Activated B cell treated with CpG ODN at 0.5 μM for 24 hours (primary cell): ENCODE measurements at regions of chr7 and their contacts with region 1.

Region 1: DNA sequence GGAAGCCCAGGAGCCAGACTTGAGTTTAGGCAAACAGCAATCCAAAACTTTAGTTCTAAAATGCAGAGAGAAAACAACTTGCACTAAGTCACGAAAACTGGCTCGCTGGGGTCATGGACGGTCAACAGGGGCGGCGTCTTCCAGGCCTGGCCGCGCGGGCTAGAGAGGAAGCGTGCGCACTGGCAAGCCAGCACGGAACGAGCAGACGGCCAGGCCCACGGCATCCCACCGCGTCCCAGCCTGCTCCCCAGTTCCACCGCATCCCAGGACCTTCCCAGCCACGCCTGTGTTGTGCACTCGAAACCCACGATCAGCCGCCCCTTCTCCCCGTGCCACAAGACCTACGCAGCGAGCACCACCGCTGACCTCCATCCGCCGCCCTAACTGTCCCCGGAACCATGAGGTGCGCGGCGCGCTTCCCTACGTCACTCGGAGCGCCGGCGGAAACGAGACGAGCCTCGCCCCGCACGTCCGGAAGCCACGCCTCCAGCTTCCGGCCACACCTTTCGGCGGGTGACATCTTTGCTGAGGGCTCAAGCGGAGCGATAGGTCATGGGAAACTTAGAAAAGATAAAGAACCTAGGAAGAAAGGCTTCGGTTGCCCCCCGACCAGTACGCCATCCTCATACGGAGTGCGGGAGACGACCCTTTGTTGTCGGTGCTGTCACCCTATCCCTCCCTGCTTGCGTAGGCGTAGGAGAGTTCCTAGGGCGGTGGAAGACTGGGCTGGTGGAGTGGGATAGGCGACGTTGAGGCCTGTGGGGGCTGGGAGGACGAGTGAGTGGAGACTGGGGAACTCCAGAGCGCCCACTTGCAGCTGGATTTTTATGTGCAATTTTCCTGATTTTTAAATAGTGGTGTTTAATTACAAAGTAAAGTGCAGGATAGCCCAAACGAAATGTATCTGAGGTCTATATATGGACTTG is at the start of gene TBRG4:
- DNase-seq: peak; percentile 94
- ATAC-seq: peak; percentile 93
- H3K4me3 Mint-ChIP-seq: peak within 1 kb of the TSS; percentile 98
- H3K27ac Mint-ChIP-seq: peak within 1 kb of the TSS; percentile 97
- H3K4me1 Mint-ChIP-seq: peaks cover 44% of the 10 kb centered on the region
- H3K27me3 Mint-ChIP-seq: peaks cover 4% of the 10 kb centered on the region
- CTCF ChIP-seq: no peak
- total RNA-seq, gene TBRG4: 109 and 128 TPM in 2 replicates

Region 2: GRCh38 chr7:44123190-44124003 is 988.2 kb before region 1 on chr7 and contains the start of gene POLD2:
- CTCF ChIA-PET with region 1: no interaction called
- POLR2A ChIA-PET with region 1: no interaction called
- intact Hi-C with region 1: loop called (anchors 5 kb)
- DNase-seq: peak; percentile 96
- ATAC-seq: peak; percentile 98
- H3K4me3 Mint-ChIP-seq: peak within 1 kb of the TSS; percentile 88
- H3K27ac Mint-ChIP-seq: peak within 1 kb of the TSS; percentile 79
- H3K4me1 Mint-ChIP-seq: peaks cover 25% of the 10 kb centered on the region
- H3K27me3 Mint-ChIP-seq: no peaks in the 10 kb centered on the region
- CTCF ChIP-seq: no peak
- total RNA-seq, gene POLD2: 146 and 147 TPM in 2 replicates

Region 3: GRCh38 chr7:44559485-44559884 is 552.1 kb before region 1 on chr7:
- CTCF ChIA-PET with region 1: no interaction called
- POLR2A ChIA-PET with region 1: no interaction called
- intact Hi-C with region 1: no loop called
- DNase-seq: no peak
- ATAC-seq: no peak
- H3K4me3 Mint-ChIP-seq: no peak overlapping the region
- H3K27ac Mint-ChIP-seq: no peak overlapping the region
- H3K4me1 Mint-ChIP-seq: peaks cover 3% of the 10 kb centered on the region
- H3K27me3 Mint-ChIP-seq: peaks cover 3% of the 10 kb centered on the region
- CTCF ChIP-seq: no peak

Region 4: DNA sequence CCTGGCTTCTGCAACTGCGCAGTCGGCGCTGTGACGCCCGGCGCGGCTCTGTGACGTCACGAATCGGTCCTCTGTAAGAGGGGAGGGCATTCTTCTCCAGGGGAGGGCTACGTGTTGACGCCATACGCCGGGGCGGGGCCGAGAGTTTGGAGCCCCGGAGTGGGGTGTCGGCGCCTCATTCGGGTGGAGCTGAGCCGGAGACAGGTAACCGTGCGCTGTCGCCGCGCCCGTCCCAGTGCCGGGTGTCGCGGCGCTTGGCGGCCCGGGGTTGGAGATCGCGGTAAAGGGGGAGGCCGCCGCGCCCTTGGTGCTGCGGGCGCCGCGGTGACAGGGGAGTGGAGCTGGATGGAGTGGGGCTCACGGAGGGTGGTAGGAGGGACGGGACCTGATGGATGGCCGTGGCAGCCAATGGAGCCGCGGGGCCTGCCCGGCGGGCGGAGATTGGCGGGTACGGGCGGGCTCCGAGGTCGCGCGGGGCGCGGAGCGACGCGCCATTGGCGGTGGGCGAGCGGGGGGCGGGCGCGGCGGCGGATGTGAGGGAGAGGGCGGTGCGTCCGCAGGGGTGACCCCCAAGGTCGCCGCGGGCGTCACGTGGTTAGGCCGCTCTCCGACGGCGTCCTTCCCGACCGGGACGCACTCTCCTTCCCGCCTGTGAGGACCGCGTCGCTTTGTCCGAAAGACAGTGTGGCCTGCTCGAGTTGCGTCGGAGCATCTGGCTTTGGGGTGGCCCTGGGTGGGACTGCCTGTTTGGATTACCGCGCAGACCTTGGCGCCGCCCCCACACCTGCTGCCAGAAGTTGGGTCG is 504.9 kb before region 1 on chr7 and contains the start of gene OGDH:
- CTCF ChIA-PET with region 1: no interaction called
- POLR2A ChIA-PET with region 1: interaction called, 4 read pairs
- intact Hi-C with region 1: loop called (anchors 1 kb)
- DNase-seq: peak; percentile 100
- ATAC-seq: peak; percentile 94
- H3K4me3 Mint-ChIP-seq: peak within 1 kb of the TSS; percentile 98
- H3K27ac Mint-ChIP-seq: peak within 1 kb of the TSS; percentile 98
- H3K4me1 Mint-ChIP-seq: peaks cover 45% of the 10 kb centered on the region
- H3K27me3 Mint-ChIP-seq: no peaks in the 10 kb centered on the region
- CTCF ChIP-seq: no peak
- total RNA-seq, gene OGDH: 79.5 and 81.7 TPM in 2 replicates

Region 5: DNA sequence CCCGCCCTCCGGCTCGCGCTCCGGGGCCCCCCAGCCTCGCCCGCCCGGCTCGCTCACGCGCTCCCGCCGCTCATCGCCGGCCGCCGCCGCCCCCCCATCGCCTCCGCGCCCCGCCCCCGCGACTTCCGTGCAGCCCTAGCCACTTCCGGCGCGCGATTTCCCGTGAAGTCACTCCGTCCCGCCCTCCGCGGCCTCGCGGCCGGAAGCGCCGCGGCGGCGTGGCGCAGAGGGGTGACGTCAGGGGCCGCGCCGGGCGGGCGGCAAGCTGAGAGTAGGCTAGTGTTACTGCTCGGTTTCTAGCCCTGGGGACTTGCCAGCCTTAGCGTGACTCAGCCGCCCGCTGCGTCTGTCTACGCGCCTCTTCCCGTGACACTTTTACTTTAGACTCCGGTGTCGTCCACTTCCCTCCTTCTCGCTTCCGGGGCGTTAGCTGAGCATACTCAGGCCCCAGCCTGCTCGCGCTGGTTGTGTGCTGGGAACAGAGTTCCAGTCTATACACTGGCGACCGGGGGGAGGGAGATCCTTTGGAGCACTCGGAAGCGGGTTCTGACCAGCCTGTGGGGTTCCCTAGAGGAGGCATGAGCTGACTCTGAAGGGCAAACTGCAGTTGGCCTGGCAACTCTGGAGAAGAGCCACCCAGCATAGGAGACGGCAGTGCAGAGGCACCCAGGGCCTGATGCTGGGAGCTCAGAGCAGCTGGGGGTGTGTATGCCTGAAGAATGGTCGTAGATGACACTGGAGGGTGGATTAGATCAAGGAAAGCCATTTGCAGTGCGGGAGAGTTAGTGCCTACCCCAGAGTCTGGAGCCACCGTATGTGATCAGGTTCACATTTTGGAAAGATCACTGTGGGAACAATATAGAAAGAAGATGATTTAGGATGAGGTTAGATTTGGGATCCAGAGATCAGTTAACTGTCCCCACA is 225.9 kb before region 1 on chr7 and contains the start of gene PURB:
- CTCF ChIA-PET with region 1: interaction called, 3 read pairs
- POLR2A ChIA-PET with region 1: interaction called, 27 read pairs
- intact Hi-C with region 1: loop called (anchors 1 kb)
- DNase-seq: peak; percentile 98
- ATAC-seq: peak; percentile 85
- H3K4me3 Mint-ChIP-seq: peak within 1 kb of the TSS; percentile 95
- H3K27ac Mint-ChIP-seq: peak within 1 kb of the TSS; percentile 99
- H3K4me1 Mint-ChIP-seq: peaks cover 59% of the 10 kb centered on the region
- H3K27me3 Mint-ChIP-seq: no peaks in the 10 kb centered on the region
- CTCF ChIP-seq: no peak
- total RNA-seq, gene PURB: 21.3 and 23.8 TPM in 2 replicates

Region 6: GRCh38 chr7:44980393-44981034 is 131.0 kb before region 1 on chr7:
- CTCF ChIA-PET with region 1: no interaction called
- POLR2A ChIA-PET with region 1: interaction called, 23 read pairs
- intact Hi-C with region 1: loop called (anchors 1 kb)
- DNase-seq: peak; percentile 56
- ATAC-seq: peak; percentile 63
- H3K4me3 Mint-ChIP-seq: peak overlapping the region; percentile 74
- H3K27ac Mint-ChIP-seq: peak overlapping the region; percentile 92
- H3K4me1 Mint-ChIP-seq: peaks cover 86% of the 10 kb centered on the region
- H3K27me3 Mint-ChIP-seq: no peaks in the 10 kb centered on the region
- CTCF ChIP-seq: no peak

Region 7: GRCh38 chr7:45026984-45027773 is 84.4 kb before region 1 on chr7:
- CTCF ChIA-PET with region 1: no interaction called
- POLR2A ChIA-PET with region 1: interaction called, 26 read pairs
- intact Hi-C with region 1: loop called (anchors 1 kb)
- DNase-seq: peak; percentile 41
- ATAC-seq: peak; percentile 75
- H3K4me3 Mint-ChIP-seq: peak overlapping the region; percentile 83
- H3K27ac Mint-ChIP-seq: peak overlapping the region; percentile 84
- H3K4me1 Mint-ChIP-seq: peaks cover 77% of the 10 kb centered on the region
- H3K27me3 Mint-ChIP-seq: no peaks in the 10 kb centered on the region
- CTCF ChIP-seq: no peak